Left cardiac atrium (tissue), 4 donors: ENCODE measurements at regions of chr3 and their contacts with region 1.

Region 1: DNA sequence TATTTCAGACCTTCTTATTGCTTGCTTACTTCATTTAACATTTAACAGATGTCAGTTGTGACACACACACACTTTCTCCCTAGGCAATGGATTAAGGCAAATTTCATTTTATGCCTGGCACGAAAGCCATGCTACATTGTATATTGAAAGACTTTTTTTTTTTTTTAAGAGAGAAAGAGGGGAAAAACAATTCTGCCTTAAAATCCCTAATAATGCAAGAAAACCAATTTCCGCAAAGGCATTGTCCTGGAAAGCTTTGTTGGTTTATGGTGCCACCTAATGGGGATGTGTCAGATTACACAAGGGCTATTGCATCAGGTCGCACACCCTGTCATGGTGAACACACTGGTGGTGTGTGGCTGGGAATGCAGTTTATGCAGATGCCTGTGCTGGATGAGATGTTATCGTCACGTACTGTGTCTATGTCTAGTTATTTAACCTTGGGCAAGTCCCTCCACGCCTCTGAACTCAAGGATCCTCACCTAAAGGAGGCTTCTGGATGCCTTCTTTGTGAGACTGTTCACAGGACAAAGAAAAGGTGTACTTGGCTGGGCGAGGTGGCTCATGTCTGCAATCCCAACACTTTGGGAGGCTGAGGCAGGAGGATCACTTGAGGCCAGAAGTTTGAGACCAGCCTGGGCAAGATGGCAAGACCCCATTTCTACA is 37.3 kb upstream of the RFTN1 start:
- DNase-seq: peak; percentile 58
- ATAC-seq: peak; percentile 79 to 86

Region 2: DNA sequence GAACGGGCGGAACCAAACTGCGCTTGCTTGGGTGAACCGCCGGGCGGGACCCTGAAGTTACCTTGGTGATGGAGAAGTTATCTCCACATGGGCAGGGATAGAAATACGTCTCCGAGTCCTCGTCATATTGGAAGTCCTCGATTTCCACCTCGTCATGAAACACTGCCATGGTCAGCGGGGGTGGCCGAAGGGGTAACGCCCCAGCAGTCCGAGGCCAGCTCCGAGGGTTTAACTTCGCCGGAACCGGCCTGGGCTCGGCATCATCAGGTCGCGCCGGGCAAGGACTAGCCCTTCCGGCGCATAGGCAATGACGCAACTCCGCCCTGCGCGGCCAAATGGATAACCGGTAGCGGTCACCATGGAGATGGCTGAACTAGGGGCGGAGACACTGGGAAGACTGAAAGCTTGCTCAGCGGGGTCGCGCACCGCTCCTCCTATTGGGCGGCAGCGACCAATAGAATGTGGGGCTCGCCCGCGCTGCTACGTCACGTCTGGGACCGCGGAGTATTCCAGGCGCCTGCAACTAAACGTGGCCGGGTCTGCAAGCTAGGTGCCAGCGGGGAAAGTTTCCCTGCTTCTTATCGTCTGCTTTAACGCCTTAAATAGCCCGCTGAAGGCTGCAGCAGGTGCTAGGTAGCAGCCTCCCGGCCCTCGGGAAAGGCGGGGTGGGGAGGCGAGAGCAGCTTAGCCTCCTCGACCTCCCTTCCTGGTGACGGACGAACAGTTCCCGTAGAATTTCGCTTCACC is 285.9 kb before region 1 on chr3 and contains the starts of genes DPH3 and OXNAD1:
- intact Hi-C with region 1: loop called in 1 of 2 experiments (anchors 2 kb)
- DNase-seq: peak; percentile 100
- ATAC-seq: peak; percentile 100
- total RNA-seq, gene DPH3: 18.5 to 22.1 TPM
- total RNA-seq, gene OXNAD1: 12.8 to 15.4 TPM